ENCODE measurements at regions of chr7 and their contacts with region 1.

Region 1: GRCh38 chr7:322111-322671 is 32.2 kb downstream of the FOXL3 start:
- DNase-seq: no peak
- H3K4me3 ChIP-seq: no peak overlapping the region
- H3K27ac ChIP-seq: no peak overlapping the region
- H3K4me1 ChIP-seq: no peaks in the 10 kb centered on the region
- H3K27me3 ChIP-seq: no peaks in the 10 kb centered on the region
- CTCF ChIP-seq: peak; percentile 80 to 98 (median 90)
- POLR2A ChIP-seq: no peak

Region 2: DNA sequence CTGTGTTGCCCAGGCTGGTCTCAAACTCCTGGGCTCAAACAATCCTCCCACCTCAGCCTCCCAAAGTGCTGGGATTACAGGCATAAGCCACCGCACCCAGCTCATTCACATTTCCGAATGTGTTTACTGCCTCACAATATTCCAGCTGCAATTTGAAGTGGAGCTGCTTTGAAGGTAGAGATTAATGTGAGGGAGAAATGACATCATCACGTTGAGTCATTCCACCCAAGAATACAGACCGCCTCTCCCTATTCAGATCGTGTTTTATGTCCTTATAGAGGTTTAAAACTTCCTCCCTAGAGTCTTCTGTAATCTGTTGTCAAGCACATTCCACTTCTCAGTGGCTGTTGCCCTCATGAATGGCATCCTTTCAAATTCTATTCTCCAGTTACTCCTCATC is 297.9 kb after region 1 on chr7:
- intact Hi-C with region 1: loop called (anchors 10 kb)
- DNase-seq: no peak
- H3K4me3 ChIP-seq: no peak overlapping the region
- H3K27ac ChIP-seq: no peak overlapping the region
- H3K4me1 ChIP-seq: no peaks in the 10 kb centered on the region
- H3K27me3 ChIP-seq: no peaks in the 10 kb centered on the region
- CTCF ChIP-seq: no peak
- POLR2A ChIP-seq: no peak

Region 3: GRCh38 chr7:774161-775109 is 452.2 kb after region 1 on chr7:
- intact Hi-C with region 1: loop called (anchors 5 kb)
- DNase-seq: no peak
- H3K4me3 ChIP-seq: no peak overlapping the region
- H3K27ac ChIP-seq: no peak overlapping the region
- H3K4me1 ChIP-seq: peaks cover 32% of the 10 kb centered on the region
- H3K27me3 ChIP-seq: no peaks in the 10 kb centered on the region
- CTCF ChIP-seq: peak; percentile 69 to 88 (median 82)
- POLR2A ChIP-seq: no peak

Region 4: DNA sequence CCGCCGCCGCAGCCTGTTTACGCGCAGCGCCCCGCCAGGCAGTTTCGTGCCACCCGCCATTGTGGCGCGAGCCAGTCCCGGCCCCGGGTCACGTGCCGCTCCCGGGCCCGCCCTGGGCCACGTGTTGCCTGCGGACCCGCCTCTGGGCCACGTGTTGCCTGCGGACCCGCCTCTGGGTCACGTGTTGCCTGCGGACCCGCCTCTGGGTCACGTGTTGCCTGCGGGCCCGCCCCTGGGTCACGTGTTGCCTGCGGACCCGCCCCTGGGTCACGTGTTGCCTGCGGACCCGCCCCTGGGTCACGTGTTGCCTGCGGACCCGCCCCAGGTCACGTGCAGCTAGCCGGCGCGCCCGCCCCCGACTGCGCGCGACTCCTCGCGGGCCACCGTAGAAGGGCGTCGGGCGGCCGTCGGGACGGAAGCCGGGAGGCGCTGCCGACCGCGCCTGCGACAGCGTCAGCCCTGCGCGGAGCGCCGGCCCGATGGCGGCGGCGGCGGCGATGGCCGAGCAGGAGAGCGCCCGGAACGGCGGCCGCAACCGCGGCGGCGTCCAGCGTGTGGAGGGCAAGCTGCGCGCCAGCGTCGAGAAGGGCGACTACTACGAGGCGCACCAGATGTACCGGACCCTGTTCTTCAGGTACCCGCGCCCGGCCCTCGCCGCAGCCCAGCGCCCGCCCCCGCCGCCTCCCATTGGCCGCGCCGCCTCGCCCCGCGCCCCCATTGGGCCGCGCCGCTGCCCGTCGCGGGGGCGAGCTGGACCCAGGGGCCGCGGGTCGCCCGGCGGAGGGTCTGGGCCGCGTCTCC is 554.2 kb after region 1 on chr7 and contains the start of gene GET4:
- intact Hi-C with region 1: loop called (anchors 10 kb)
- DNase-seq: peak in 1 of 2 donors; percentile 95
- H3K4me3 ChIP-seq: peak within 1 kb of the TSS; percentile 82 to 88
- H3K27ac ChIP-seq: peak within 1 kb of the TSS; percentile 91
- H3K4me1 ChIP-seq: peaks cover 43% of the 10 kb centered on the region
- H3K27me3 ChIP-seq: no peaks in the 10 kb centered on the region
- CTCF ChIP-seq: no peak
- POLR2A ChIP-seq: peak in 1 of 2 donors; percentile 77
- total RNA-seq, gene GET4: 35.8 TPM

Measured in vagina (tissue), 2 donors.